Vagina (tissue), 2 donors: ENCODE measurements at regions of chr9 and their contacts with region 1.

Region 1: DNA sequence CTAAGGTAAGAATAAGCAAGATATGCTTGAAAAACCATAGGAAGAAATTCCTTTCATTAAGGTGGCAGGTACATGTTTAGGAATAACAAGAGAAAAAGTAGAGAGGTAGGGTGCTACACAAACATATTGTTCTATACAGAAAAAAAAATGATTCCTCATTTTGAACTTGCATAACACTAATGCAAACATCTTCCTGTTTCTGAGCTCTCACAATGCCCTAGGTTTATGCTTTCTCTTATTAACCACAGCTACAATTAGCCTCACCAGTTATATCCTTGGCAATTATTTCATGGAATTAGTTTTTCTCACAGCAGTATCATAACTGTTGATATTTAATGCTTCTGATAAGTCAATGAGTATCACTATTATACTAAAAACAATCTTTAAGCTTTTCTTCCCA is 20.7 kb downstream of the CEMIP2 start:
- DNase-seq: no peak
- H3K4me3 ChIP-seq: no peak overlapping the region
- H3K27ac ChIP-seq: no peak overlapping the region
- H3K4me1 ChIP-seq: peaks cover 8% of the 10 kb centered on the region
- H3K27me3 ChIP-seq: no peaks in the 10 kb centered on the region
- CTCF ChIP-seq: no peak
- POLR2A ChIP-seq: no peak

Region 2: DNA sequence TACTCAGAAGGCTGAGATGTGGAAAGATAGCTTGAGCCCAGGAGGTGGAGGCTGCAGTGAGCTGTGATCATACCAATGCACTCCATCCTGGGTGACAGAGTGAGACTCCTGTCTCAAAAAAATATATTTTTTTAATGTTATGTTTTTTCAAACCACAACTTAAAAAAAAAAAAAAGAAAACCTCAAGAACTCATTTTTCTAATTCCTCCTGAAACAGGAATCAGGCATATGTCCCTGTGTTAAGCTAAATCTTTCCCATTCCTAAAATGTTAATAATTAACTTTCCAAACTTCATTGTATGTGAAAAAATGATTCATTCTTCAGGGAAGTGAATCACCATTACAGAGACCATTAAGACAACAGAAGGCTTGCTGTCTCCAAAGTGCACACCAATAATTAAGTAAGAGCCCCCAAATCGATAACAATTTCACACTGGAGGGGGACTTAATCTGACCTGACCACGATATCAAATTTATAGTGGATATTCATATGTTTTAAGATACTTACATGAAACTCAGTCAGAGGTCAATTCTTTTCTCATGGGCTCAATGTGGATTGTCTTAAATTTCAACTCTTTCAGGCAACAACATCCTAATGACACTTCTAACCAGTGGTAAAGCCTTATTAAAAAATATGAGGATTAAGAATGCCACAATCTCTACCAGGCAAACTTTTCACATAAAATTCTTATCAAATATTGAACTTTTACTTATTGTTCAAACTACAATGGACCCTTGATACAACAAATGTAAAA is 15.5 kb after region 1 on chr9:
- intact Hi-C with region 1: loop called (anchors 2 kb)
- DNase-seq: no peak
- H3K4me3 ChIP-seq: no peak overlapping the region
- H3K27ac ChIP-seq: no peak overlapping the region
- H3K4me1 ChIP-seq: peaks cover 51% of the 10 kb centered on the region
- H3K27me3 ChIP-seq: no peaks in the 10 kb centered on the region
- CTCF ChIP-seq: no peak
- POLR2A ChIP-seq: no peak

Region 3: GRCh38 chr9:71783120-71783530 is 35.5 kb after region 1 on chr9:
- intact Hi-C with region 1: no loop called
- DNase-seq: no peak
- H3K4me3 ChIP-seq: no peak overlapping the region
- H3K27ac ChIP-seq: peak overlapping the region; percentile 22
- H3K4me1 ChIP-seq: no peaks in the 10 kb centered on the region
- H3K27me3 ChIP-seq: no peaks in the 10 kb centered on the region
- CTCF ChIP-seq: no peak
- POLR2A ChIP-seq: no peak